Posterior cingulate gyrus (tissue), 11 donors: ENCODE measurements at regions of chr5 and their contacts with region 1.

Region 1: DNA sequence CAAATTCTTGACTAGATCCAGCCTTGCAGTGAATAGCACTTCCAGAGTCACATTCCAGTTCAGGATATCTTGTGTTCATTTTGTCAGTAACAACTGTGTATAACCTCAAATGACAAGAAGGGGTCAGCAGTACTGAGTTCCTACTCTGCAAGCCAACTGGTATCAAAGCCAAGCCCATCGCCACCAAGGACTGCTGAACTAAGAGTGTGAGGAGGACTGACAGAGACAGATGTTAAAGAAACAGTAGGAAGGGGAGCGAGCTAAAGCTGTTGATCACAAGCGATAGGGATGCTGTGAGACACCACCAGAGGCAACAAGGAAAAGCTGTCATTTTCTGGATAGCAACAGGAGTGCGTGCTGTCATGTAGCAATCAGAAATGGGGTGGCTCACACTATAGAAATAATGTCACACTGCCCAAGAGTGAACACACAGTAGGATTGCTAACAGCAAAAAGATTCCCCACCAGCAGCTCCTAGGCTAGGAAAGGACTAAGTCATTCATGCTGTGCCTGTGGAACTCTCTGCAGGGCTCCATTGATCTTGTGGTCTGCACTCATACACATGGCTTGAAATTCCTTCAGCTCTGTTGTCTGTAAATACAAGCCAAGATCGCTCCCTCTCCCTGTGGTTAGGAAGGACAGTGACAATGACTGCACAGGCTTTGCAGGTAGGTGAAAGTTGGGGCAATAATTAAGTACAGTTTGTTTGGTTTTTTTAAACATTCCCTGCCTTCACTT is 658.6 kb downstream of the NR2F1-AS1 start:
- DNase-seq: no peak

Region 2: DNA sequence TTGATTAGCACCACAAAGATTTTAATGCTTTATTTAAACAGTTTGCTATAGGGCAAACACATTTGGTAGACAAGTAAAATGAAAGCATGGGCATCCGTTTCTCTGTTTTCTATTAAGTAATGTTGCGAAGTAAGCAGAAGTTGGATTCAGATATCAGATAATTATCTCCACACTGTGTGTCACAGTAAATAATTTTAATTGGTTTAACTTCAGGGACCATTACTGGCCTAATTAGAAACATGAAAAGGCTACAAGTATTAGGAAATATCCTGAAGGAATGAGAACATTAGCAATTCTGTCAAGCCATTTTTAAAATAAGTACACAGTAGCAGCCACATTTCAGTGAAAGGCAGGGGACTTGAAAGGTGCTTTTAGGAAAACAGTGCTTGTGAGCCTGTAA is 316.8 kb before region 1 on chr5:
- intact Hi-C with region 1: no loop called
- DNase-seq: no peak

Region 3: GRCh38 chr5:93058309-93058708 is 135.9 kb after region 1 on chr5:
- intact Hi-C with region 1: loop called (anchors 5 kb)
- DNase-seq: no peak